BJ (cell line): ENCODE measurements at regions of chr12 and their contacts with region 1.

Region 1: DNA sequence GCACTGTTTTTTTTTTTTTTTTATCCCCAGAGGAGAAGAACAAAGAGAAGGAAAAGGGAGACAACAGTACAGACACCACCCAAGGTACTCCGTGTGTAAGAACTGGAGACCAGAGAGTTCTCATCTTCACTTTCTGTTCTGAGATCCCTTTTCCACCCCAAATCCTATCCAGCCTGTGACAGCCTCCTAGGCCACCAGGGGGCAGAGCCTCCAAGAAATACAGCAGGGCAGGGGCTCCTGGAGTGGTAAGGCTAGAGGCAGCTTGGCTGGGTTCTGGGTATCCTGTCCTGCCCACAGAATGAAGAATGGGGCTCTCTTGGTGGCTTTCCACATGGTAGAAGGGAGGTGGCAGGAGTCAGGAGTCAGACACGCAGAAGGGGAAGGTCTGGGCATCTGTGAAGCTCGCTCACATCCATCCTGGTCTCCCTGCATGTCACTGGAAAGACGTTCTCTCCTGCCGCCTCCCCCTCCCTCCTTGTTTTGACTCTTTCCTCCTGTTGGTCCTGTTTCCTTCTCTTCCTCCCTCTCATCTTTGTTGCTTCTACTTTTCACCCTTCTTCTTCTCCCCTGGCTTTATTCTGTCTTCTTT is 12.0 kb downstream of the CLSTN3 start:
- DNase-seq: no peak
- H3K4me3 ChIP-seq: no peak overlapping the region
- H3K27me3 ChIP-seq: no peaks in the 10 kb centered on the region
- CTCF ChIP-seq: peak; percentile 88

Region 2: GRCh38 chr12:7129872-7130680 is 12.1 kb before region 1 on chr12 and contains the start of gene CLSTN3:
- CTCF ChIA-PET with region 1: interaction called, 12 read pairs
- POLR2A ChIA-PET with region 1: interaction called, 3 read pairs
- DNase-seq: no peak
- H3K4me3 ChIP-seq: peak within 1 kb of the TSS; percentile 61
- H3K27me3 ChIP-seq: no peaks in the 10 kb centered on the region
- CTCF ChIP-seq: no peak
- polyA plus RNA-seq, gene CLSTN3: 14.3 and 19.2 TPM in 2 replicates

Region 3: DNA sequence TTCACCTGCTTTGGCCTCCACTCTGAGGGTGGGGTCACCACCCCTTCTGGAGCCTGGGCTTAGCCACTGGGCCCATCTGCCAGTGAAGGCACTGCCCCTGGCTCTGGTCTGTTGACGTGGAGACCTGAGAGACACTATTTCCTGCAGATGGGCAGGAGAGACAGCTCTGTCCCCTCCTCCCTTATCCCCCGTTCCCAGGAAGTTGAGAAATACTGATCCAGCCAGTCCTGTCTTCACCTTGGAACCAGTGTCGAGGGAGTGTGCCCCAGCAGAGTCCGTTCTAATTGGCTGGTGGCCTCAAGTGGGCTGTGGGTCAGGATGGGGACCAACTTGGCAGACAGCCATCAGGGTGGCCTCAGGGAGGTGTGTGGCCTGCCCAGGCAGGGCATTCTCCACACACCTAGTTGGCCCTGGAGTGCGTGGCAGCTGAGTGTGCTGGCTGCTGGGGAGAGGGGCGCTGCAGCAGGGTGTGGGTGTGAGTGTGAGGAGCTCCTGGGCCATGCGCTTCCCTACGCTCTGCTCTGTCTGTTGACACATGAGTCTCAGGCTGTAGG is 13.4 kb after region 1 on chr12:
- CTCF ChIA-PET with region 1: interaction called, 46 read pairs
- POLR2A ChIA-PET with region 1: interaction called, 7 read pairs
- DNase-seq: no peak
- H3K4me3 ChIP-seq: no peak overlapping the region
- H3K27me3 ChIP-seq: no peaks in the 10 kb centered on the region
- CTCF ChIP-seq: no peak

Region 4: DNA sequence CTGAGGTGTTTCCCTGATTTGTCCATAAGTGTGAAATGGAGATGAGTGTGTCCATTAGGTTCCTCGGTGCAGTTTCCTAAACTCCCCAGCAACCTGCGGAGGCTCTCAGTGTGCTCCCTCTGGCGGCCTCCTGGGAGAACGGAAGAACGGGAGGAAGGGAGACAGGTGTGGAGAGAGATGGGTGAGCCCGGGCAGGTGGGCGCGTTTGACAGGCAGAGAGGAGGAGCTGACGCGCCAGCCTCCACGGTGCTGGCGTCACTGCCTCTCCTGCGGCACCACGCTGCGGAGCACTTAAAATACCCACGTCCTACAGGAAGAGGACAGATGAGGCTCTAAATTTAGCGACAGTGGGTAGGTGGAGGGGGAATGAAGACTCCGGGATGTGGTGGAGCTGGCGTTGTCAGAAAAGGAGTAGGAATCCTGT is 20.6 kb after region 1 on chr12:
- CTCF ChIA-PET with region 1: interaction called, 46 read pairs
- POLR2A ChIA-PET with region 1: no interaction called
- DNase-seq: no peak
- H3K4me3 ChIP-seq: no peak overlapping the region
- H3K27me3 ChIP-seq: peaks cover 2% of the 10 kb centered on the region
- CTCF ChIP-seq: peak; percentile 76

Region 5: DNA sequence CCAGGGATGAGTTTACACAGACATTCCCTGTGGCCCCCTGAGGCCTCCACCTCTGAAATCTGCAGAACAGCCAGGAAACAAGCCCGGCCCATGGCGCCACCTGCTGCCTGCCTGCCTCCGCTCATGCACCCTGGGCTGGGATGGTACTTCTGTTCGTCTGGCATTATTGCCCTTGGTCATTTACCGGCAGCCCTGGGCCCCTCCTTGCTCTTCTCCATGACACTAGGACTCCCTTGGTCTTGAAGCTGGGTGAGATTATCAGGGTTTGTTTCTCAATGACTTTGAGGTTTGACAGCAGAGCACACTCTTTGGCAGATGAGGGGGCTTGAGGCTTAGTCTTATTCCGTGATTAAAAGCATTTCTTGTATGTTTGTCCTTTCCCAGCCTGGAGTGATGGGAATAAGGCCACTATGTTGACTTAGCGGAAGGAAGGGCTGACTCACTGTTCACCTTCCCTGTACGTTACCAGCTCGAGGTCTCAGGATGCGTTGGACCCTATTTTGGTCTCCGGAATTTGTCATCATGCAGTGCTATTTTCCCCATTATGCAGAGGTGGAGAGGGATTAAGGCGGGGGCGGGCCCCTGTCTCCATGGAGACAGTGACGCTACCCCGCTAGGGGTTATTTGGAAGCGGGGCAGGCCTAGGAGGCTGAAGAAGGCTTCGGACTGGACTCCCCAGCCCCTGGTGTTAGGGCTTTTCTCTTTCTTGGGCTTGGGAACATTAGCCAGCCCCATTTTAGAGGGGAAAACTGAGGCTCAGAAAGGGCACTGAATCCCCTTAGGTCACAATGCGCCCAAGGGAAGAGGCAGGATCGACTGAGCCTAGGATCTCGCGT is 46.6 kb after region 1 on chr12:
- CTCF ChIA-PET with region 1: interaction called, 41 read pairs
- POLR2A ChIA-PET with region 1: no interaction called
- DNase-seq: peak; percentile 20
- H3K4me3 ChIP-seq: peak overlapping the region; percentile 96
- H3K27me3 ChIP-seq: no peaks in the 10 kb centered on the region
- CTCF ChIP-seq: peak; percentile 87